Vagina (tissue), 2 donors: ENCODE measurements at regions of chr9 and their contacts with region 1.

Region 1: GRCh38 chr9:13446938-13447842 is 167.7 kb upstream of the MPDZ start:
- DNase-seq: no peak
- H3K4me3 ChIP-seq: peak overlapping the region in 1 of 2 donors; percentile 11
- H3K27ac ChIP-seq: no peak overlapping the region
- H3K4me1 ChIP-seq: peaks cover 5% of the 10 kb centered on the region
- H3K27me3 ChIP-seq: no peaks in the 10 kb centered on the region
- CTCF ChIP-seq: peak in 1 of 3 experiments; percentile 18
- POLR2A ChIP-seq: no peak

Region 2: DNA sequence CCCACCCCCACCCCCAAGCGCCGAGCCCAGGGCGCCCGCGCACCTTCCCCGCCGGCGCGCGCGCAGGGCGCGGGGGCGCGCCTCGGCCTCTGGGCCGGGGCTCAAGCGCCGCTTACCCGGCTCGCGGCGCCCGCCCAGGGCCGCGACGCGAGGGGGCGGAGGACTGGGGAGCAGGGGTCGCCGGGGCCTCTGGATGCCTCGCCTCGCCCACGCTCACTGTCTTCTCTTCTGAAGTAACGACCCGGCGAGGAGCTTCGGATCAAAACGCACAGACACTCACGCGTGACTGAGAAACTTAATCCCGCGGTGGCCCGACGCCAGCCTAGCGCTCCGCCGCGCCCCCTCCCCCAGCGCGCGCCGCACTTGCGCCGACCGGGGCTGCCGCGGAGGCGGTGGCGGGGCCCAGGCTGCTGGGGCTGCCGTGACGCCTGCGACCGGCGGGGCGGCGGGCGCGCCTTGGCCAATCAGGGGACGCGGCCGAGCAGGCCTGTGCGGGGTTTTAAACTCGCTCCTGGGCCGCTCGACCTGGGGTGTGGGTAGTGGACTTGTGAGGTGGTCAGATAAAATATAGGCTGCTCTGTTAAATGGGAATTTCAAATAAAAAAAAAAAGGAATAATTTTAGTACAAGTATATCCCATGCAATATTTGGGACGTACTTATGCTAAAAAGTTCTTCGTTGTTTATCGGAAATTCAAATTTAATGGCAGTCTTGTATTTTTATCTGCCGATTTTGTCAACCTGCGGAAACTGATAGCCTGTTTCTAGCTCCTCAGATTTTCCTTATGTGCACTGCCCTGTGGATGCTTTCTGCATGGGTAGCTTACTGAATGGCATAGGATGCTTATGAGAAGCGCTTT is 167.7 kb before region 1 on chr9 and contains the start of gene MPDZ:
- intact Hi-C with region 1: no loop called
- DNase-seq: no peak
- H3K4me3 ChIP-seq: peak within 1 kb of the TSS; percentile 52 to 74
- H3K27ac ChIP-seq: peak within 1 kb of the TSS; percentile 87
- H3K4me1 ChIP-seq: peaks cover 18% of the 10 kb centered on the region
- H3K27me3 ChIP-seq: no peaks in the 10 kb centered on the region
- CTCF ChIP-seq: no peak
- POLR2A ChIP-seq: peak in 1 of 2 donors; percentile 49
- total RNA-seq, gene MPDZ: 38.8 TPM

Region 3: GRCh38 chr9:14347406-14348122 is 900.4 kb after region 1 on chr9:
- intact Hi-C with region 1: loop called (anchors 10 kb)
- DNase-seq: no peak
- H3K4me3 ChIP-seq: peak overlapping the region; percentile 42 to 50
- H3K27ac ChIP-seq: peak overlapping the region; percentile 59
- H3K4me1 ChIP-seq: peaks cover 46% of the 10 kb centered on the region
- H3K27me3 ChIP-seq: peaks cover 5% of the 10 kb centered on the region
- CTCF ChIP-seq: no peak
- POLR2A ChIP-seq: no peak